IMR-90 (cell line): ENCODE measurements at regions of chr2 and their contacts with region 1.

Region 1: GRCh38 chr2:235639428-235639773 is 145.6 kb downstream of the AGAP1 start:
- DNase-seq: peak; percentile 95
- ATAC-seq: peak; percentile 78
- H3K4me3 ChIP-seq: no peak overlapping the region
- H3K27ac ChIP-seq: no peak overlapping the region
- H3K4me1 ChIP-seq: peaks cover 30% of the 10 kb centered on the region
- H3K27me3 ChIP-seq: no peaks in the 10 kb centered on the region
- CTCF ChIP-seq: no peak
- POLR2A ChIP-seq: 0 out of 2 replicates have a peak, but pooled peaks have one; percentile 25
- RAD21 ChIP-seq: 0 out of 2 replicates have a peak, but pooled peaks have one; percentile 13

Region 2: GRCh38 chr2:235591921-235592320 is 47.5 kb before region 1 on chr2:
- CTCF ChIA-PET with region 1: no interaction called
- POLR2A ChIA-PET with region 1: no interaction called
- dilution Hi-C with region 1: no loop called
- in situ Hi-C with region 1: no loop called
- intact Hi-C with region 1: no loop called
- DNase-seq: peak; percentile 21
- ATAC-seq: no peak; the same call in 1 of the 2 replicates
- H3K4me3 ChIP-seq: no peak overlapping the region
- H3K27ac ChIP-seq: no peak overlapping the region
- H3K4me1 ChIP-seq: peaks cover 2% of the 10 kb centered on the region; the same call in 1 of the 2 replicates
- H3K27me3 ChIP-seq: no peaks in the 10 kb centered on the region
- CTCF ChIP-seq: no peak
- POLR2A ChIP-seq: no peak
- RAD21 ChIP-seq: no peak

Region 3: DNA sequence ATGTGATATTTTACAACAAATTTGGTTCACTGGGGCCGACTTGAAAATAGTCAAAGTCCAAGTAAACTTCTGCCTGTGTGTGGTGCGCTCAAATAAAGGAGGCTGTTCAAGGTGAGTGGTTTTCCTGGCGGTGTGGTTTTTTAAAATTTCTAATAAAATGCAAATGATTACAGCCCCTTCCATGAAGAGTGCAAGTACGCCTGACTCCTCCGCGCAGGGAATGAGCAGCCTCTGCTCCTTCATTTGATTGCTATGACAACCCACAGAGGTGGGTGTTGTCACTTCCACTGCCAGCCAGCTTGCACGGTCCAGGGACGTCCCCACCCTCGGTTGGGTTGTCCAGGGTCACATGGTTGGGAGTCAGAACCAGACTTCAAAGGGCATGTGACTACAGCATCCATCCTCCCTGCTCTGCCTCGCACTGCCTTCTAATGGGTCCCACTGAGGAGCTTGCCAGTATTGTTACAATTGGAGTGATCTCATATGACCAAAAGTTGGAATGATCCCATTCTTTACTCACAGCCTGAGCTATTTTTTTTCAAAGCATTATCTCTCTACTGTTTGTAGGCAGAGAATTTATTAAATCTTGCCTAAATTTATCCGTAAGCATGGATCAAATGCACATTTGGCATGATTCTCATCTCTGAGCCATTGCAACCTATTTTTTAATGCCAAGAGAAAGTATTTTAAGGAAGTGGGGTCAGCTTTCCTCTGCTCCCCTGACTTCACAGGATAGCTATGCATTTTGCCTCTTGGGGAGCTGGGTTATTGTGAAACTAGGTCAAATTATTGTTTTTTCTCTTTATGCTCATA is 24.3 kb before region 1 on chr2:
- CTCF ChIA-PET with region 1: interaction called, 5 read pairs
- POLR2A ChIA-PET with region 1: no interaction called
- dilution Hi-C with region 1: no loop called
- in situ Hi-C with region 1: no loop called
- intact Hi-C with region 1: loop called (anchors 1 kb)
- DNase-seq: peak; percentile 85
- ATAC-seq: peak; percentile 61
- H3K4me3 ChIP-seq: no peak overlapping the region
- H3K27ac ChIP-seq: peak overlapping the region; percentile 31; the same call in 1 of the 2 replicates
- H3K4me1 ChIP-seq: peaks cover 9% of the 10 kb centered on the region
- H3K27me3 ChIP-seq: no peaks in the 10 kb centered on the region
- CTCF ChIP-seq: no peak
- POLR2A ChIP-seq: no peak
- RAD21 ChIP-seq: no peak

Region 4: DNA sequence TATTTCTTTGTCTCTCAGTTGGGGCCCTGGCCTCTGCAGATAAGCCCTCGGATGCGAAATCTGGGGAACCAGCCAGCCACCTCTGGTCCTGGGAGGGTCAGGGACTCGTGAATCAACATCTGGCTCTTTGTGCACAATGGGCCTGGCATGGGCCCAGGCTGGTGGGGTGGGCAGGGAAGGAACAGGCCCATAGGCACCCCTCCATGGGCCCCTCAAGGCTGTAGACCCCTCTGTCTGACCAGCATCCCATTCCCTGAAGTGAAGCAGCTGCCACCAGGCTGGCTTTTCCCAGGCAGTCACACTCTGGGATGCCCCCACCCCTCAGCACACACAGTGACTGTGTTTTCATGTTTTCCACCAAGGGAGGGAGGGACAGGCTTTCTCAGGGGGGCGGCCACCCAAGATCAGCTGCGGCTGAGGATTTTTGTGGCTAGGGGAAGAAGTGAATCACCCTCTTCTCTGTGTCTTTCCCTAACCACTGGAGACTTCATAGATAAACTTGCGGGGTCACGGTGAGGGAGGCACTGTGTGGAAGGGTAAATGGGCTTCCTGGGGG is 20.4 kb after region 1 on chr2:
- CTCF ChIA-PET with region 1: no interaction called
- POLR2A ChIA-PET with region 1: no interaction called
- dilution Hi-C with region 1: no loop called
- in situ Hi-C with region 1: no loop called
- intact Hi-C with region 1: loop called (anchors 2 kb)
- DNase-seq: peak; percentile 93
- ATAC-seq: peak; percentile 96
- H3K4me3 ChIP-seq: no peak overlapping the region
- H3K27ac ChIP-seq: peak overlapping the region; percentile 10; the same call in 1 of the 2 replicates
- H3K4me1 ChIP-seq: peaks cover 23% of the 10 kb centered on the region
- H3K27me3 ChIP-seq: no peaks in the 10 kb centered on the region; the same call in 1 of the 2 replicates
- CTCF ChIP-seq: no peak
- POLR2A ChIP-seq: no peak
- RAD21 ChIP-seq: peak; percentile 17

Region 5: GRCh38 chr2:235951982-235952381 is 312.6 kb after region 1 on chr2:
- CTCF ChIA-PET with region 1: no interaction called
- POLR2A ChIA-PET with region 1: no interaction called
- dilution Hi-C with region 1: no loop called
- in situ Hi-C with region 1: no loop called
- intact Hi-C with region 1: no loop called
- DNase-seq: no peak
- ATAC-seq: no peak
- H3K4me3 ChIP-seq: no peak overlapping the region
- H3K27ac ChIP-seq: no peak overlapping the region
- H3K4me1 ChIP-seq: no peaks in the 10 kb centered on the region
- H3K27me3 ChIP-seq: no peaks in the 10 kb centered on the region
- CTCF ChIP-seq: no peak
- POLR2A ChIP-seq: no peak
- RAD21 ChIP-seq: no peak

Region 6: DNA sequence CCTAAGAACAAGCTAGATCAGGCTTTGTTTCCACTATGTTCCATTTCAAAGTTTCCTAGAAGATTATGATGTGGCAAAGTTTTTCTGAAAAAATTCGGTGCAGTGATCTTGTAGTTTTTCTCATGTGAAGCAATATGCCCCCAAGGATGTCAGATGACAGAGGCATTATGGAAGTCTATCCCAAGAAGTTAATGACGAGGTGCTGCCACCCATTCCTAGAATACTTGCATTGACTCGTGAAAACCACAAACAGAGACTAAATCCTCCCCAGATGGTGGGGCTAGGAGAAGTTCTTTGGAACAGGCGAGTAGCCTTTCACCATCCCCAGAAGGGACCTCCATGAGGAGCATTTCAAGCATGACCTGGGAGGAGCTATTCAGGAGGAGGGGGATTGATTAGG is 1406.0 kb after region 1 on chr2:
- CTCF ChIA-PET with region 1: no interaction called
- POLR2A ChIA-PET with region 1: no interaction called
- dilution Hi-C with region 1: no loop called
- in situ Hi-C with region 1: no loop called
- intact Hi-C with region 1: no loop called
- DNase-seq: no peak
- ATAC-seq: no peak
- H3K4me3 ChIP-seq: no peak overlapping the region
- H3K27ac ChIP-seq: no peak overlapping the region
- H3K4me1 ChIP-seq: no peaks in the 10 kb centered on the region
- H3K27me3 ChIP-seq: peaks cover 19% of the 10 kb centered on the region
- CTCF ChIP-seq: no peak
- POLR2A ChIP-seq: no peak
- RAD21 ChIP-seq: no peak

Region 7: GRCh38 chr2:237085248-237086221 is 1446.1 kb after region 1 on chr2 and contains the start of gene COPS8:
- CTCF ChIA-PET with region 1: no interaction called
- POLR2A ChIA-PET with region 1: no interaction called
- dilution Hi-C with region 1: no loop called
- in situ Hi-C with region 1: loop called (anchors 25 kb)
- intact Hi-C with region 1: no loop called
- DNase-seq: peak; percentile 91
- ATAC-seq: peak; percentile 99
- H3K4me3 ChIP-seq: peak within 1 kb of the TSS; percentile 66
- H3K27ac ChIP-seq: peak within 1 kb of the TSS; percentile 82
- H3K4me1 ChIP-seq: no peaks in the 10 kb centered on the region; the same call in 1 of the 2 replicates
- H3K27me3 ChIP-seq: no peaks in the 10 kb centered on the region
- CTCF ChIP-seq: peak; percentile 26
- POLR2A ChIP-seq: peak; percentile 96
- RAD21 ChIP-seq: no peak; the same call in 1 of the 2 replicates
- total RNA-seq, gene COPS8: 47.0 and 61.4 TPM in 2 replicates